Heart right ventricle (tissue), 16 donors: ENCODE measurements at regions of chr20 and their contacts with region 1.

Region 1: DNA sequence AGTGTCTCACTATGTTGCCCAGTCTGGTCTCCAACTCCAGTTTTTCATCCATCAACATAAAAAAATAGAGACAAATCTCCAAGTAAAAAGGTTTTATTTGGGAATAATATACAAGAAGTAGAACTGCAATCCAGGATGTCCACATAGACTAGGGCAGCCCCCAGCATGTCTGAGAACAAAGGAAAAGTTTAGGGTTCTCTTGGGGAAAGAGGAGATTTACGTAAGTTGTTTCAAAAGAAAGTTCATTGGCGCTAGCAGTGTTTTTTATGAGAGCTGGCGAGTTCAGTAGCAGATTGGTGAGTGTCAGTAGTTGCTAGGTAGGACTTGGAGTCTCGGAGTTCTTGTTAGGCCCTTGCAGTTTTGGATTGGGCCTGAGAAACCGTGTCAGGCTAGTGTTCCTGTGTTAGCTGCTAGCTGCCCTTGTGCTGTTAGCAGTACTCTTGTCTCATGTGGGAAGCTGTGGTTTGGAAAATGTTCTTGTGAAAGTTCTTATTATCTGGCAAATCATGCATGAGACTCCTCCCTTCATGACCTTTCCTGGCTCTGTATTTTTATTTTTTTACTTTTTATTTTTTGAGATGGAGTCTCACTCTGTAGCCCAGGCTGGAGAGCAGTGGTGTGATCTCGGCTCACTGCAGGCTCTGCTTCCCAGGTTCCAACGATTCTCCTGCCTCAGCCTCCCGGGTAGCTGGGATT is 24.7 kb downstream of the TTLL9 start:
- DNase-seq: peak in 1 of 2 donors; percentile 88
- ATAC-seq: peak; percentile 89 to 99 (median 98)
- H3K4me3 ChIP-seq: no peak overlapping the region
- H3K27ac ChIP-seq: peak overlapping the region in 7 of 10 donors; percentile 5 to 83 (median 71)
- H3K4me1 ChIP-seq: peaks cover 0 to 12% (median 6%) of the 10 kb centered on the region in 9 donors
- H3K27me3 ChIP-seq: peaks cover 0 to 6% (median 0%) of the 10 kb centered on the region in 7 donors
- CTCF ChIP-seq: no peak

Region 2: DNA sequence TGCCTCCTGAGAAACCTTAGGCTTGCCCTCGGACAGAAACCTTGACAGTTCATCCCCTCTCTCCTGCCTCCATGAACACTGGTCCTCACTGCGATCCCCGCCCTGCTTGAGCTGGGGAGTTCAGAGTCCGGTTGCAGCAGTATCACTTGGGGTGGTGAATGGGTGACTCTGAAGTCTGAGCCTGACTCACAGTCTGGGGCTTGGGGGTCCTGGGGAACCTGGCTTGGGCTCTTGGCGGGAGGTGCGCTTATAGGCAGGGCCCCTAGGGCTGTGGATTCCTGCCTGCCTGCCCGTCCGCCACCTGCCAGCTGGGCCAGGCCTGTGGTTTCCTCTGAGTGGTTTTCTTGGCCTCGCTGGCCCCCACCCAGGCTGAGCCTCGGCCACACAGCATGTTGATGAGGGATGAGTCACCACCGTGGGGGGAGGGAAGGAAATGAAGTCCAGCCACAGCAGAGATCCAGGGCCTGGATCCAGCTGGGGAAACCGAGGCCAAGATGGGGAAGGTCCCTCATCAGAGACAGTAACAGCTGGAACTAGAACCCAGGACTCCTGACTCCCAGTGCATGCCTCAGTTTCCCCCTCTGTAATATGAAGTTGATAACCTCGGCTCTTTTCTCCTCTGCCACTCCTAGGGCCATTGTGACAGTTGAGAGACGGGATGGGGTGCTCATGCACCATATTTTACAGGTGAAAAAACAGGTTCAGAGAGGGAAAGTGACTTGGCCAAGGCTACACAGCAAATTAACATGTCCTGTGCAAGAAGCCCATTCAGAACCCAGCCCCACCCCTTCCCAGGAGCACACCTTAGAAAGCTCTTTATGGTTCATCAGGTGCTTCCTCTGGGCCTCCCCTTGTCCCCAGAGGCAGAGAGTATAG is 58.9 kb before region 1 on chr20:
- intact Hi-C with region 1: no loop called
- DNase-seq: peak; percentile 77 to 86
- ATAC-seq: peak; percentile 63 to 87 (median 80)
- H3K4me3 ChIP-seq: no peak overlapping the region
- H3K27ac ChIP-seq: peak overlapping the region in 8 of 10 donors; percentile 3 to 91 (median 68)
- H3K4me1 ChIP-seq: peaks cover 16 to 79% (median 41%) of the 10 kb centered on the region in 9 donors
- H3K27me3 ChIP-seq: peaks cover 0 to 9% (median 0%) of the 10 kb centered on the region in 7 donors
- CTCF ChIP-seq: no peak

Region 3: GRCh38 chr20:31872406-31872805 is 22.7 kb before region 1 on chr20:
- intact Hi-C with region 1: loop called in 1 of 10 experiments (anchors 2 kb)
- DNase-seq: no peak
- ATAC-seq: no peak
- H3K4me3 ChIP-seq: no peak overlapping the region
- H3K27ac ChIP-seq: no peak overlapping the region
- H3K4me1 ChIP-seq: peaks cover 3 to 21% (median 13%) of the 10 kb centered on the region in 9 donors
- H3K27me3 ChIP-seq: peaks cover 0 to 42% (median 0%) of the 10 kb centered on the region in 7 donors
- CTCF ChIP-seq: no peak

Region 4: DNA sequence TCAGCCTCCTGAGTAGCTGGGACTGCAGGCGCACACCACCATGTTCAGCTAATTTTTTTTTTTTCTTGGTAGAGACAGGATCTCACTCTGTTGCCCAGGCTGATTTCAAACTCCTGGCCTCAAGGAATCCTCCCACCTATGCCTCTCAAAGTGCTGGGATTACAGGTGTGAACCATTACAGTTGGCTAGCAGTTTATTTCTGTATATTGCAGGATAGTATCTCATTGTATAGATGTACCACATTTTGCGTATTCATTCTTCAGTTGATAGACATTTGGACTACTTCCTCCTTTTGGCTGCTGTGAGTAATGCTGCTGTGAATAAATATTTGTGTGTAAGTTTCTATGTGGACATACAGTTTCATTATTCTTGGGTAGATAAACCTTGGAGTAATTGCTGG is 495.9 kb after region 1 on chr20:
- intact Hi-C with region 1: no loop called
- DNase-seq: no peak
- ATAC-seq: no peak
- H3K4me3 ChIP-seq: no peak overlapping the region
- H3K27ac ChIP-seq: no peak overlapping the region
- H3K4me1 ChIP-seq: peaks cover 0 to 28% (median 6%) of the 10 kb centered on the region in 9 donors
- H3K27me3 ChIP-seq: no peaks in the 10 kb centered on the region
- CTCF ChIP-seq: no peak